ENCODE measurements at regions of chr16 and their contacts with region 1.

Region 1: DNA sequence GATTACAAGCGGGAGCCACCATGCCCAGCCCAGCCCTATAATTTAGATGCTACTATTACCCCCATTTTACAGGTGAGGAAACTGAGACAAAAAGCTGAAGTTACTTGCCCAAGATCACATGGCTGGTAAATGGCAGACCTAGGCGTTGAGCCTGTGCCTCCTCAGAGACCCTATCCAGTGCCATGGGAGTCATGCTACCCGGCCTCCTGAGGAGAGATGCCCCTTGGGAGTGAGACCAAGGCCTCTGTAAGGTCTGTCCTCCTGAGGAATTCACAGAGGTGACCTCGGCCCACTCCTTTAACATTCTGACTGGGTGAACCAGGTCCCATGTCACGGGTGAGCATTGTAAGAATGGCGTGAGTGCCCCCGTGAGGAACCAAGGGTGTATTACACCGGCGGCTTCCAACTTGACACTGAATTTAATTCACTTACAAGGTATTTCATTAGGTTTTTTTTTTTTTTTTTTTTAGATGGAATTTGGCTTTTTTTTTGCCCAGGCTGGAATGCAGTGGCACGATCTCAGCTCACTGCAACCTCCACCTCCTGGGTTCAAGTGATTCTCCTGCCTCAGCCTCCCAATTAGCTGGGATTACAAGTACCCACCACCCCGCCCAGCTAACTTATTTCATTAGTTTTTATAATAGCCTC is 95.7 kb downstream of the ABCC6 start:
- DNase-seq: peak; percentile 88
- H3K4me3 ChIP-seq: no peak overlapping the region
- H3K27ac ChIP-seq: peak overlapping the region; percentile 79 to 85 (median 82)
- H3K4me1 ChIP-seq: peaks cover 0 to 25% (median 17%) of the 10 kb centered on the region in 4 donors
- H3K27me3 ChIP-seq: no peaks in the 10 kb centered on the region
- CTCF ChIP-seq: peak; percentile 81 to 93 (median 92)
- EP300 ChIP-seq: no peak
- POLR2A ChIP-seq: no peak

Region 2: DNA sequence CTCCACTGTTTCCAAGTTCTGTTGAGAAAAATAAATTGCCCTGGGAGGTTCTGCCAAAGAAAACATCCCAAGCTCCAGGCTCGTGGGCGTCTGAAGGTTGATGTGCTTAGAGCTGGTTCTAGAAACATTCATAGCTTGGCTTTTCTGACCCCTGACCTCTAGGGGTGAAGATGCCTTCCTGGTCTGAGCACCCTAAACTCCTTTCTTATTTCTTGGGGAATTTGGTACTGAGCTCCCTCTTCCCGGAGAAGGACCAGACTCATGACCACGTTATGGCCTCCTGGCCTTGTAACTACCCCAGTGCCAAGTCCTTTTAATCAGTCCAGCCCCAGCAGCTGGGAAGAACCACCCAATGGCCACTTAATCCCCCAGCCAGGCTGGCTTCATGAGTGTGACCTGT is 337.1 kb before region 1 on chr16:
- intact Hi-C with region 1: loop called (anchors 10 kb)
- DNase-seq: no peak
- H3K4me3 ChIP-seq: no peak overlapping the region
- H3K27ac ChIP-seq: peak overlapping the region; percentile 67 to 98 (median 84)
- H3K4me1 ChIP-seq: peaks cover 0 to 98% (median 89%) of the 10 kb centered on the region in 4 donors
- H3K27me3 ChIP-seq: no peaks in the 10 kb centered on the region
- CTCF ChIP-seq: no peak
- EP300 ChIP-seq: no peak
- POLR2A ChIP-seq: no peak

Region 3: GRCh38 chr16:15857724-15858560 is 269.7 kb before region 1 on chr16:
- intact Hi-C with region 1: loop called (anchors 5 kb)
- DNase-seq: peak; percentile 94
- H3K4me3 ChIP-seq: peak overlapping the region; percentile 51 to 70 (median 68)
- H3K27ac ChIP-seq: peak overlapping the region; percentile 95 to 98 (median 96)
- H3K4me1 ChIP-seq: peaks cover 0 to 29% (median 20%) of the 10 kb centered on the region in 4 donors
- H3K27me3 ChIP-seq: peaks cover 0 to 4% (median 4%) of the 10 kb centered on the region in 3 donors
- CTCF ChIP-seq: no peak
- EP300 ChIP-seq: no peak
- POLR2A ChIP-seq: peak in 1 of 2 donors; percentile 15

Region 4: GRCh38 chr16:15874745-15875314 is 252.8 kb before region 1 on chr16:
- intact Hi-C with region 1: loop called (anchors 2 kb)
- DNase-seq: peak; percentile 83
- H3K4me3 ChIP-seq: no peak overlapping the region
- H3K27ac ChIP-seq: peak overlapping the region; percentile 71 to 83 (median 74)
- H3K4me1 ChIP-seq: peaks cover 0 to 39% (median 25%) of the 10 kb centered on the region in 4 donors
- H3K27me3 ChIP-seq: no peaks in the 10 kb centered on the region
- CTCF ChIP-seq: peak; percentile 59 to 69 (median 64)
- EP300 ChIP-seq: peak in 1 of 4 donors; percentile 63
- POLR2A ChIP-seq: no peak

Region 5: GRCh38 chr16:15899538-15900100 is 228.0 kb before region 1 on chr16:
- intact Hi-C with region 1: no loop called
- DNase-seq: no peak
- H3K4me3 ChIP-seq: no peak overlapping the region
- H3K27ac ChIP-seq: no peak overlapping the region
- H3K4me1 ChIP-seq: no peaks in the 10 kb centered on the region
- H3K27me3 ChIP-seq: no peaks in the 10 kb centered on the region
- CTCF ChIP-seq: no peak
- EP300 ChIP-seq: no peak
- POLR2A ChIP-seq: no peak

Region 6: GRCh38 chr16:15949210-15950160 is 178.1 kb before region 1 on chr16 and contains the start of gene ABCC1:
- intact Hi-C with region 1: loop called (anchors 5 kb)
- DNase-seq: no peak
- H3K4me3 ChIP-seq: peak within 1 kb of the TSS; percentile 84 to 97 (median 92)
- H3K27ac ChIP-seq: peak within 1 kb of the TSS; percentile 89 to 94 (median 93)
- H3K4me1 ChIP-seq: peaks cover 0 to 56% (median 50%) of the 10 kb centered on the region in 4 donors
- H3K27me3 ChIP-seq: no peaks in the 10 kb centered on the region
- CTCF ChIP-seq: no peak
- EP300 ChIP-seq: no peak
- POLR2A ChIP-seq: no peak
- total RNA-seq, gene ABCC1: 22.5 to 51.8 (median 32.5) TPM

Region 7: DNA sequence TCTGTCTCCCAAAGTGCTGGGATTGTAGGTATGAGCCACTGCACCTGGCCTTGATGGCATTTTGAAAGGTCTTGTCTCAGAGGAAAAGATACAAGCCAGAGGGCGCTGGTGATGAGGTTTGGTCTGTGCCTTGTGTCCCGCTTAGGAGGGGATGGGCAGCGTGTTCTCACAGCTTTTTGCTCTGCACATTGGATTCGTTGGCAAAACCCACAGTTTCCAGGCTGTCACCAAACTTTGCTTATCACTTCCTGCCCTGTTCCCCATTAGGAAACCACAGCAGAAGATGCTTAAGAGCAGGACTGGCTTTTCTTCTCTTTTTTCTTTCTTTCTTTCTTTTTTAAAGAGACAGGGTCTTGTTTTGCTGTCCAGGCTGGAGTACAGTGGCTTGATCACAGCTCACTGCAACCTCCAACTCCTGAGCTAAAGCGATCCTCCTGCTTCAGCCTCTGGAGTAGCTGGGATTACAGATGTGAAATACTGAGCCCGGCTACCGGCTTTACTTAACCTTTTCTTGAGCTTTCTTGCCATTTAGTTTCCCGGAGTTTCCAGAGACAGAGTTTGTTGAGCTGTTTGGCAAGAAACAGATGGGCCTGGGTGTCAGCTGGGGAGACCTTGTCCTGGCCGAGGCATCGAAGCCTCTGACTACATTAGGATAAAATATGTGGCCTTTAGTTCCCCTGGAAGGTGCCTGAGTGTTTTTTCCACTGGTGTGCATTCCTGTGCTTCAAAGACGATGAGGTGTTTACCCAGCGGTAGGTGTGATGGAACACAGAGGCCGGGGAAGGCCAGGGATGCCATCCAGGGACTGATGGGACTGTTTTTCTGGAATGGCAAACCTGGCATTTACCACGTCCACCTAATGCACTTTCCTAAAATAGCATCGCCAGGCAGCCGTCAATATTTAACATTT is 65.3 kb before region 1 on chr16:
- intact Hi-C with region 1: loop called (anchors 5 kb)
- DNase-seq: peak; percentile 91
- H3K4me3 ChIP-seq: no peak overlapping the region
- H3K27ac ChIP-seq: peak overlapping the region; percentile 75 to 92 (median 85)
- H3K4me1 ChIP-seq: peaks cover 0 to 75% (median 64%) of the 10 kb centered on the region in 4 donors
- H3K27me3 ChIP-seq: no peaks in the 10 kb centered on the region
- CTCF ChIP-seq: peak in 3 of 4 experiments; percentile 18 to 36 (median 25)
- EP300 ChIP-seq: peak; percentile 89 to 97 (median 90)
- POLR2A ChIP-seq: no peak

Region 8: GRCh38 chr16:16073891-16074881 is 53.4 kb before region 1 on chr16:
- intact Hi-C with region 1: no loop called
- DNase-seq: no peak
- H3K4me3 ChIP-seq: no peak overlapping the region
- H3K27ac ChIP-seq: peak overlapping the region; percentile 75 to 92 (median 85)
- H3K4me1 ChIP-seq: peaks cover 0 to 88% (median 78%) of the 10 kb centered on the region in 4 donors
- H3K27me3 ChIP-seq: no peaks in the 10 kb centered on the region
- CTCF ChIP-seq: no peak
- EP300 ChIP-seq: no peak
- POLR2A ChIP-seq: no peak

Region 9: GRCh38 chr16:16148755-16149154 is 21.2 kb after region 1 on chr16:
- intact Hi-C with region 1: no loop called
- DNase-seq: no peak
- H3K4me3 ChIP-seq: no peak overlapping the region
- H3K27ac ChIP-seq: peak overlapping the region; percentile 73 to 93 (median 86)
- H3K4me1 ChIP-seq: peaks cover 0 to 53% (median 35%) of the 10 kb centered on the region in 4 donors
- H3K27me3 ChIP-seq: no peaks in the 10 kb centered on the region
- CTCF ChIP-seq: no peak
- EP300 ChIP-seq: no peak
- POLR2A ChIP-seq: no peak

Region 10: GRCh38 chr16:16158741-16159374 is 31.3 kb after region 1 on chr16:
- intact Hi-C with region 1: no loop called
- DNase-seq: no peak
- H3K4me3 ChIP-seq: no peak overlapping the region
- H3K27ac ChIP-seq: no peak overlapping the region
- H3K4me1 ChIP-seq: peaks cover 0 to 3% (median 0%) of the 10 kb centered on the region in 4 donors
- H3K27me3 ChIP-seq: no peaks in the 10 kb centered on the region
- CTCF ChIP-seq: no peak
- EP300 ChIP-seq: no peak
- POLR2A ChIP-seq: no peak

Measured in sigmoid colon (tissue), 7 donors.